Activated CD8-positive, alpha-beta T cell treated with anti-CD3 and anti-CD28 coated beads for 36 hours (primary cell): ENCODE measurements at regions of chr22 and their contacts with region 1.

Region 1: DNA sequence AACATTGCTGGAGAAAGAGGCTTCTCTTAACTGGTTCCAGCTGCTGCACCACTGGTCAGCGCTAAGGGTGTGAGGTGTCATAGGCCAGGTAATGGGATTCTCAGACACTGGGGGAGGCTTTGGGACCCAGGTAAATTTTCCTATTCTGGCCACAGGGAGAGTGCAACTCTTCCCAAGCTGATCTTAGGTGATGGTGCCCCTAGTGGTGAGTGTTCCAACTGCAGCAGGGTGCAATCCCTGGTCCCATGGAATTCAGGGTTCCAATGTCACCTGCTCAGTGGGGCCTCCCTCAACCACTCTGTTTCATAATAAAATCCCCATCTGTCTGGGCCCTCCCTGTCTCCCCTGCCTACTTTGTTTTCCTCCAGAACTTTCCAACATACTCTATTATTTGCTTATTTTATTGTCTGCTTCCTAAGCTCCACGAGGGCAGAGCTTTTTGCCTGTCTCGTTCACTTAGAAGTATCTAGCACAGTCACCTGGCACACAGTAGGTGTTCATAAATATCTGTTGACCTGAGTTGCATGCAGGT is 2.9 kb upstream of the SGSM1 start:
- DNase-seq: peak; percentile 69
- ATAC-seq: no peak
- H3K4me3 Mint-ChIP-seq: no peak overlapping the region
- H3K27ac Mint-ChIP-seq: no peak overlapping the region
- H3K4me1 Mint-ChIP-seq: peaks cover 7% of the 10 kb centered on the region
- H3K27me3 Mint-ChIP-seq: peaks cover 3% of the 10 kb centered on the region
- CTCF ChIP-seq: peak; percentile 97

Region 2: DNA sequence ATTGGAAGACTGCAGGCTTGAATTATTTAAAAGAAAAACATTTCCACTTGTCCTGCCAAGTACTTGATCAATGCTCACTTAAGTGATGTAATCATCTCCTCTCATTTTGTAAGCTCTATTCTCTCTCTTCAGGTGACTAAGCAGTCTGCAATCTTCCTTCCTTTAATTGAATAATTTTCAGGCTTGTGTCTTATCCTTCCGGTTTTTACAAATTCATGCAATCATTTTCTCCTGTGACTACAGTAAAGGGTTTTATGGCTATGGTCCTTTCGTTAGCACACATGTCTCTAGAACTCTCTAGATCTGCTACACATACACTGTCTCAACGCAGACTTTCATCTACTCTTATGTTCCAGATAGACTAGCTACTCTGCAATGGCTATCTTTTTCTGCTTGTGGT is 320.5 kb before region 1 on chr22:
- CTCF ChIA-PET with region 1: no interaction called
- POLR2A ChIA-PET with region 1: no interaction called
- intact Hi-C with region 1: no loop called
- DNase-seq: no peak
- ATAC-seq: no peak
- H3K4me3 Mint-ChIP-seq: no peak overlapping the region
- H3K27ac Mint-ChIP-seq: no peak overlapping the region
- H3K4me1 Mint-ChIP-seq: peaks cover 17% of the 10 kb centered on the region
- H3K27me3 Mint-ChIP-seq: no peaks in the 10 kb centered on the region
- CTCF ChIP-seq: no peak

Region 3: GRCh38 chr22:24695561-24696511 is 107.2 kb before region 1 on chr22:
- CTCF ChIA-PET with region 1: no interaction called
- POLR2A ChIA-PET with region 1: no interaction called
- intact Hi-C with region 1: no loop called
- DNase-seq: no peak
- ATAC-seq: no peak
- H3K4me3 Mint-ChIP-seq: no peak overlapping the region
- H3K27ac Mint-ChIP-seq: no peak overlapping the region
- H3K4me1 Mint-ChIP-seq: no peaks in the 10 kb centered on the region
- H3K27me3 Mint-ChIP-seq: no peaks in the 10 kb centered on the region
- CTCF ChIP-seq: no peak

Region 4: GRCh38 chr22:24791362-24791761 is 11.7 kb before region 1 on chr22:
- CTCF ChIA-PET with region 1: interaction called, 11 read pairs
- POLR2A ChIA-PET with region 1: no interaction called
- intact Hi-C with region 1: no loop called
- DNase-seq: no peak
- ATAC-seq: no peak
- H3K4me3 Mint-ChIP-seq: no peak overlapping the region
- H3K27ac Mint-ChIP-seq: no peak overlapping the region
- H3K4me1 Mint-ChIP-seq: no peaks in the 10 kb centered on the region
- H3K27me3 Mint-ChIP-seq: peaks cover 2% of the 10 kb centered on the region
- CTCF ChIP-seq: no peak

Region 5: DNA sequence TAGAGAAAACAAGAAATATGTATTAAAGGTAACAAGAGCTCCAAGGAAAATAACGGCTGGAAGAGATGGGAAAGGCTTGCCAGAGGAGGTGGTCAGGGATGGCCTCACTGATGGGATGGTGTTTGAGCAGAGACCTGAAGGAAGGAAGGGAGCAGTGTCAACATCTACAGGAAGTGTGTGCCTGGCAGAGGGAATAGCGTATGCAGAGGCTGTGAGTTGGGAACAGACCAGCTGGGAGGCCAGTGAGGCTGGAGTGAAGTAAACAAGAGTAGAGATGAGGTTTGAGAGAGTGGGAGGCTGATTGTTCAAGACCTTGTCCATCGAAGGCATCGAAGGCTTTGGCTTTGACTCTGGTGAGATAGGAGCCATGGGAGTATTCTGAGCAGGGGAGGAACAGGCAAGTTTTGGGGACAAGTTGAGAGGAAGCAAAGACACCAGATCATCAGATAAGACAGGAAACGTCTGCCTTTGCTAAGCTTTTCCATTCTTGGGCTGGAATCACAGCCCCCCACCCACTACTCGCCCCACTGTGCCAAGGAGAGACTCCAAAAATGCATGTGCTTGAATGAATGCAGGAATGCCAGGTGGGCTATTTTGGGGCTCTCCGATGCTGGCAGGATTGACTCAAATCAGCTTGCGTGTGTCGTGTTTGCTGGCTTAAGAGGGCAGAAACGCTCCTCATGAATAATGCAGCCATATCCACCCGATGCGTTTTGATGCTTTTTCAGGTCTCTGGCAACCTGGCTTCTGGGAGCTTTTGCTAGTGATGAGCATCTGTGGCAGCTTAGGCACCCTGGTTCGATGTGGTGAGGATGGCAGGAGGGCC is 10.1 kb after region 1 on chr22:
- CTCF ChIA-PET with region 1: interaction called, 28 read pairs
- POLR2A ChIA-PET with region 1: interaction called, 3 read pairs
- intact Hi-C with region 1: no loop called
- DNase-seq: no peak
- ATAC-seq: no peak
- H3K4me3 Mint-ChIP-seq: no peak overlapping the region
- H3K27ac Mint-ChIP-seq: no peak overlapping the region
- H3K4me1 Mint-ChIP-seq: peaks cover 6% of the 10 kb centered on the region
- H3K27me3 Mint-ChIP-seq: no peaks in the 10 kb centered on the region
- CTCF ChIP-seq: no peak

Region 6: DNA sequence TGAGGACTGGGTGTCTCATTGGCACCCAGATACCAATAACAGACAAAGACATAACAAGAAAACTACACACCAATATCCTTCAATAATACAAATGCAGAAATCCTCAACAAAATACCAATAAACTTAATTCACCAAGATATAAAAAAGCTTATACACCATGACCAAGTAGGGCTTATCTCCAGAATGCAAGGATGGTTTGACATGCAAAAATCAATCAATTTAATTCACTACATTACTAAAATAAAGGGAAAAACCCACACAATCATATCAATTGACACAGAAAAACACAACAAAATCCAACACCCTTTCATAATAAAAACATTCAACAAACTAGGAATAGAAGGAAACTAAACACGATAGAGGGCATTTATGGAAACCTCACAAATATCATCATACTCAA is 102.8 kb after region 1 on chr22:
- CTCF ChIA-PET with region 1: no interaction called
- POLR2A ChIA-PET with region 1: no interaction called
- intact Hi-C with region 1: no loop called
- DNase-seq: no peak
- ATAC-seq: no peak
- H3K4me3 Mint-ChIP-seq: no peak overlapping the region
- H3K27ac Mint-ChIP-seq: no peak overlapping the region
- H3K4me1 Mint-ChIP-seq: no peaks in the 10 kb centered on the region
- H3K27me3 Mint-ChIP-seq: no peaks in the 10 kb centered on the region
- CTCF ChIP-seq: no peak